ENCODE measurements at regions of chr11 and their contacts with region 1.

Region 1: GRCh38 chr11:2269601-2270321 is 627 bp downstream of the ASCL2 start:
- DNase-seq: peak; percentile 69
- ATAC-seq: peak; percentile 52
- H3K4me3 Mint-ChIP-seq: peak overlapping the region; percentile 47
- H3K27ac Mint-ChIP-seq: no peak overlapping the region
- H3K4me1 Mint-ChIP-seq: peaks cover 11% of the 10 kb centered on the region
- H3K27me3 Mint-ChIP-seq: peaks cover 81% of the 10 kb centered on the region
- CTCF ChIP-seq: no peak

Region 2: DNA sequence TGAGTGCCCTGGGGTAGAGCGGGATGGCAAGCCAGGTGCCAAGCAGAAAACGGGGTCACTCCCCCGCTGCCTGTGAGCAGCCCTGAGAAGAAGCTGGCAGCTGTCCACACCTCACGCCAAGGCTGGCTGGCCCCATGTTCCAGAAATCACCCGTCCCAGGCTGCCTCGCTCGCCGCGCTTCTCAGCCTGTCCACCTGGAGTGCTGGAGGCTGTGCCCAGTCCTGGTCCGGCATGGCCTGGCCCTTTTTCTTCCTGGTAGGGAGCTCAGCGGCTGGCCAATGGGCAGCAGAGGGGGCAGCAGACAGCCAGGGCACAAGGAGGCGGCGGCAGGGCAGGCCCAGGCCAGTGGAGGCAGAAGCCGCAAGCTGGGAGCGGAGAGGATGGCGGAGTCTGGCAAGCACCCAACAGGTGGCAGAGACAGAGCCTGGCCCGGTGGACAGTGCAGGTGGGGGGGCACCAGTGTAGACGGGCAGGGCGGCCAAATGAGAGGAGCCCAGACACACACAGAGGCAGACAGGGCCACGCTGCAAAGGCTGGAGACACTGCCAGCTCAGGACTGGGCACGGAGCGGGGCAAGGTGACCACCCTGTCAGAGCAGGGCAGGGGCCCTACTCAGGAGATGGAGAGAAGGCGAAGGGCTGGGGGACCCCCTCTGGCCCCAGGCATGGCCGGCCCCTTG is 60.9 kb before region 1 on chr11:
- CTCF ChIA-PET with region 1: interaction called, 10 read pairs
- POLR2A ChIA-PET with region 1: no interaction called
- DNase-seq: no peak
- ATAC-seq: peak; percentile 64
- H3K4me3 Mint-ChIP-seq: no peak overlapping the region
- H3K27ac Mint-ChIP-seq: no peak overlapping the region
- H3K4me1 Mint-ChIP-seq: peaks cover 10% of the 10 kb centered on the region
- H3K27me3 Mint-ChIP-seq: peaks cover 15% of the 10 kb centered on the region; the same call in 1 of the 2 replicates
- CTCF ChIP-seq: no peak

Measured in WTC11 (cell line).